Heart left ventricle (tissue), 16 donors: ENCODE measurements at regions of chr1 and their contacts with region 1.

Region 1: DNA sequence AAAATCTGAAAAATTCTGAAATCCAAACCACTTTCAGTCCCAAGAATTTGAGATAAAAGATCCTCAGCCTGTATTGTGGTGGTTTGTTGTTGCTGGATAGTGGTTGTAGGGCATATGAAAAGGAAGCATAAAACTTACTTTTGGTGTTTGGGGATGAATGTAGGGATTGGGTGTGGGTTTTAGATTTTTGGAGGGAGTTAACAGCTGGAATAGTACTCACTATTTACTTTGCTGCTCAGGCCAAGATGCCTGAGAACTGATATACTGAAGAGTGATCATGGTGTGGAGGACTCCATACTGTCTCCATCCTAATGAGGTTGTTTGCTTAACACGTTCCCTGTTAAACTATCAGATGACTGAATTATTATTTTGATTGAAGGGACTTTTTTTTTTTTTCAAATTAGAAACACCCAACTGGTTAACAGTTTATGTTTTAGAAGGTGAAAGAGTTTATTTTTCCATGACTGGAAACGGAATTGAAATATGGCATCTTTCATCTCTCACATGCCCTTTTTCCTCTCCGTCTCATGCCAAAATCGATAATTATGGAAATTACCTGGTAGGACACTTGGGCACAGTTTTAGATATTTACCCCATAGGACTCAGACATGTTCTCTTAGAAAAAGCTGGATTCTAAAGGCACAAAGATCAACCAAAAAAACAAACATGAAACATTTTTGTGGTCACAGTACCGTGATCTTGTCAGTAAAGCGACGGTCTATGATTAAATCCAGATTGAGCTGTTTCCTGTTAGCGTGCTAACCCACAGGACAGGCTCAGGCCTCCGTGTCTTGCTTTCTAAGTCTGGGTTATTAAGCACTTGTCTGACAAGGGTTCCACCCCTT is 37.3 kb downstream of the RGL1 start:
- DNase-seq: peak in 4 of 5 donors; percentile 31 to 42 (median 36)
- ATAC-seq: peak; percentile 72 to 90 (median 82)
- H3K4me3 ChIP-seq: peak overlapping the region in 8 of 12 donors; percentile 4 to 45 (median 14)
- H3K27ac ChIP-seq: peak overlapping the region in 11 of 12 donors; percentile 7 to 73 (median 57)
- H3K4me1 ChIP-seq: peaks cover 0 to 67% (median 30%) of the 10 kb centered on the region in 12 donors
- H3K27me3 ChIP-seq: no peaks in the 10 kb centered on the region
- CTCF ChIP-seq: no peak
- POLR2A ChIP-seq: no peak

Region 2: DNA sequence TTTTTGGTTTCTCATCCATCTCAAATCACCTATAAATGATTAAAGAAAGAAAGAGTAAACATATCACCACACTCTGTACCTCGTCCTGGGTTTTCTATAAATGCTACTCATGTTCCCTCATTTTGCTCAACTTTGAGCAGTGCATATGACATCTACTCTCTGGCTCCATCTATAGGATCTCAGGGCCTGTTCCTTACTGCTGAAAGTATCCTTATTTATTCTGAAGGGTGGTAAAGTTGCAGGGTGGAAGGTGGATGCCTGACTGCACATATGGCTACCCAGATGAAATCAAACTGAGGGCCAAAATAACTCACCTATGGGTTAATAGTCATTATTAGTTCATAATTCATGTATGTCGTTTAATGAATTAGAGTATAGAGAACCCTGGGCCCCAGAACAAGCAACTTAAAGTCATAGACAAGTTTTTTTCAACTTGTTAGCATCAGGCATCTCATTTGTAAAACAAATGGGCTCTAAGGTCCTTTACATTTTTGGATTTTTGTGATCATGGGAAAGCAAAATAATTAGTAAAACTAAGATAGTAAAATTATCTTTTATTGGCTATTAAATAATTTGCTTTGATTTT is 298.5 kb before region 1 on chr1:
- intact Hi-C with region 1: no loop called
- DNase-seq: no peak
- ATAC-seq: peak; percentile 61 to 86 (median 78)
- H3K4me3 ChIP-seq: no peak overlapping the region
- H3K27ac ChIP-seq: peak overlapping the region in 3 of 12 donors; percentile 9 to 13 (median 10)
- H3K4me1 ChIP-seq: peaks cover 0 to 35% (median 10%) of the 10 kb centered on the region in 12 donors
- H3K27me3 ChIP-seq: no peaks in the 10 kb centered on the region
- CTCF ChIP-seq: peak; percentile 41 to 77 (median 60)
- POLR2A ChIP-seq: no peak

Region 3: GRCh38 chr1:183871142-183871541 is 29.0 kb after region 1 on chr1:
- intact Hi-C with region 1: loop called in 3 of 10 experiments (anchors 2 to 5 kb)
- DNase-seq: no peak
- ATAC-seq: peak in 2 of 4 donors; percentile 33 to 70
- H3K4me3 ChIP-seq: no peak overlapping the region
- H3K27ac ChIP-seq: peak overlapping the region in 11 of 12 donors; percentile 56 to 84 (median 81)
- H3K4me1 ChIP-seq: peaks cover 10 to 80% (median 54%) of the 10 kb centered on the region in 12 donors
- H3K27me3 ChIP-seq: no peaks in the 10 kb centered on the region
- CTCF ChIP-seq: no peak
- POLR2A ChIP-seq: no peak

Region 4: GRCh38 chr1:183881387-183882131 is 39.4 kb after region 1 on chr1:
- intact Hi-C with region 1: loop called in 2 of 10 experiments (anchors 5 kb)
- DNase-seq: peak; percentile 65 to 76 (median 69)
- ATAC-seq: peak; percentile 44 to 90 (median 78)
- H3K4me3 ChIP-seq: no peak overlapping the region
- H3K27ac ChIP-seq: peak overlapping the region in 11 of 12 donors; percentile 5 to 80 (median 41)
- H3K4me1 ChIP-seq: peaks cover 9 to 93% (median 47%) of the 10 kb centered on the region in 12 donors
- H3K27me3 ChIP-seq: no peaks in the 10 kb centered on the region
- CTCF ChIP-seq: no peak
- POLR2A ChIP-seq: no peak